ENCODE measurements at regions of chr1 and their contacts with region 1.

Region 1: GRCh38 chr1:92994105-92994712 is 32.9 kb upstream of the DIPK1A start:
- DNase-seq: peak; percentile 78
- H3K4me3 ChIP-seq: no peak overlapping the region
- H3K27ac ChIP-seq: peak overlapping the region in 2 of 4 donors; percentile 6 to 19
- H3K4me1 ChIP-seq: peaks cover 0 to 14% (median 4%) of the 10 kb centered on the region in 4 donors
- H3K27me3 ChIP-seq: no peaks in the 10 kb centered on the region
- CTCF ChIP-seq: peak; percentile 83 to 95 (median 84)
- EP300 ChIP-seq: no peak
- POLR2A ChIP-seq: no peak

Region 2: DNA sequence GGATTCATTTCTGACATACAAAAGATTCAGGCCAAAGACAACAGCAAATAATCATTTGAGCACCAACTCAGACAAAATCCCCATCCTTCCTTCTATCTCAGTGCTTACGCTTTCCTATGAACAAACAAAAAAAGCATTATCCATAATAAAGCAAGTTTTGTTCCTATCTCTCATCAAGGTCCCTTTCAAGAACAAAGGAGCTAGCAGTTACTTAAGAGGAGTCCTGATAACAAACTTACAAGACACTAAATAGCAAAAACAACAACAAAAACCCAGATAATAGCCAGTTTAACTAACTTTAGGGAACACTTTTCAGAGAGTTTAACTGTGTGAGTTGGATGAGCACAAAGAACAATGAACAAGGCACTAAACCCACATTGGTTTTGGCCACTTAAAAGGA is 219.8 kb before region 1 on chr1:
- in situ Hi-C with region 1: no loop called
- intact Hi-C with region 1: no loop called
- DNase-seq: no peak
- H3K4me3 ChIP-seq: no peak overlapping the region
- H3K27ac ChIP-seq: no peak overlapping the region
- H3K4me1 ChIP-seq: peaks cover 0 to 3% (median 0%) of the 10 kb centered on the region in 4 donors
- H3K27me3 ChIP-seq: no peaks in the 10 kb centered on the region
- CTCF ChIP-seq: no peak
- EP300 ChIP-seq: no peak
- POLR2A ChIP-seq: no peak

Region 3: GRCh38 chr1:92858564-92859399 is 135.4 kb before region 1 on chr1:
- in situ Hi-C with region 1: loop called (anchors 5 to 10 kb)
- intact Hi-C with region 1: loop called (anchors 5 kb)
- DNase-seq: peak; percentile 59
- H3K4me3 ChIP-seq: peak overlapping the region in 3 of 4 donors; percentile 10 to 13 (median 12)
- H3K27ac ChIP-seq: peak overlapping the region; percentile 53 to 63 (median 60)
- H3K4me1 ChIP-seq: peaks cover 0 to 25% (median 13%) of the 10 kb centered on the region in 4 donors
- H3K27me3 ChIP-seq: no peaks in the 10 kb centered on the region
- CTCF ChIP-seq: peak; percentile 88 to 100 (median 96)
- EP300 ChIP-seq: no peak
- POLR2A ChIP-seq: no peak

Region 4: GRCh38 chr1:92872719-92873118 is 121.5 kb before region 1 on chr1:
- in situ Hi-C with region 1: no loop called
- intact Hi-C with region 1: loop called (anchors 5 kb)
- DNase-seq: no peak
- H3K4me3 ChIP-seq: no peak overlapping the region
- H3K27ac ChIP-seq: no peak overlapping the region
- H3K4me1 ChIP-seq: peaks cover 0 to 21% (median 13%) of the 10 kb centered on the region in 4 donors
- H3K27me3 ChIP-seq: no peaks in the 10 kb centered on the region
- CTCF ChIP-seq: no peak
- EP300 ChIP-seq: no peak
- POLR2A ChIP-seq: no peak

Measured in transverse colon (tissue), 4 donors.